ENCODE measurements at regions of chr2 and their contacts with region 1.

Region 1: GRCh38 chr2:226984750-226985582 is 149.1 kb downstream of the RHBDD1 start:
- DNase-seq: peak in 2 of 5 donors; percentile 29 to 37
- ATAC-seq: peak; percentile 60 to 87 (median 72)
- H3K4me3 ChIP-seq: no peak overlapping the region
- H3K27ac ChIP-seq: no peak overlapping the region
- H3K4me1 ChIP-seq: peaks cover 0 to 14% (median 6%) of the 10 kb centered on the region in 12 donors
- H3K27me3 ChIP-seq: no peaks in the 10 kb centered on the region
- CTCF ChIP-seq: peak; percentile 35 to 77 (median 66)
- POLR2A ChIP-seq: no peak

Region 2: DNA sequence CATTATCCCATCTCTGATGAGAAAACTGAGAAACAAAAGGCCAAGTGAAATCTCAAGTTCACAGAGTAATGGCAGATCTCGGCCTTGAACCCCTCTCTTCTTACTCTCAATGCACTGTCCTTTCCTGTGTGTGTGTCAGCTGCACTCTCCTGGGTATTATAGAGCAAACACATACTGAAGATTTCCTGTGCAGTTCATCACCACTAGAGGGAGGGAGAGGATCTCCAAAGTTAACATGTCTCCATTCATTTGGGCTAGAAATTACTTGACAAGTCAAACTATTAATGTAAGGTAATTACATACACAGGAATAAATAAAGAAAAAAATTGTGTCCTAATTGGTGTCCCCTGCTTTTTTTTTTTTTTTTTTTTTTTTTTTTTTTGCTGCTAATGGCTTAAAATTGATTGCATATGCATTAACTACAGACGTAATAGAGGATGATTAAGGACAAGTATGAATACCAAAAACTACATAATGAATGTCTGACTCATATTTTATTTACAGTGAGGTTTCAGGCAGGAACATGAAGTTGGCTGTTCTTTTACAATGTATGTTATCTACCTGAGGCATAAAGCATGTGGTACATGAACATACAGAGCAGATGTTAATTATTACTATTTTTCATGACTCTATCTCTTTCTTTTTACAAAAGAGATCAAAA is 1316.2 kb before region 1 on chr2:
- intact Hi-C with region 1: loop called (anchors 1 to 5 kb)
- DNase-seq: peak in 1 of 5 donors; percentile 10
- ATAC-seq: peak in 3 of 4 donors; percentile 63 to 69 (median 67)
- H3K4me3 ChIP-seq: no peak overlapping the region
- H3K27ac ChIP-seq: no peak overlapping the region
- H3K4me1 ChIP-seq: no peaks in the 10 kb centered on the region
- H3K27me3 ChIP-seq: peaks cover 0 to 15% (median 0%) of the 10 kb centered on the region in 9 donors
- CTCF ChIP-seq: peak; percentile 43 to 76 (median 58)
- POLR2A ChIP-seq: no peak

Region 3: GRCh38 chr2:225889446-225889850 is 1095.5 kb before region 1 on chr2:
- intact Hi-C with region 1: loop called in 9 of 10 experiments (anchors 5 to 10 kb)
- DNase-seq: peak in 1 of 5 donors; percentile 7
- ATAC-seq: peak in 2 of 4 donors; percentile 52 to 64
- H3K4me3 ChIP-seq: no peak overlapping the region
- H3K27ac ChIP-seq: no peak overlapping the region
- H3K4me1 ChIP-seq: no peaks in the 10 kb centered on the region
- H3K27me3 ChIP-seq: no peaks in the 10 kb centered on the region
- CTCF ChIP-seq: peak; percentile 49 to 86 (median 76)
- POLR2A ChIP-seq: no peak

Region 4: DNA sequence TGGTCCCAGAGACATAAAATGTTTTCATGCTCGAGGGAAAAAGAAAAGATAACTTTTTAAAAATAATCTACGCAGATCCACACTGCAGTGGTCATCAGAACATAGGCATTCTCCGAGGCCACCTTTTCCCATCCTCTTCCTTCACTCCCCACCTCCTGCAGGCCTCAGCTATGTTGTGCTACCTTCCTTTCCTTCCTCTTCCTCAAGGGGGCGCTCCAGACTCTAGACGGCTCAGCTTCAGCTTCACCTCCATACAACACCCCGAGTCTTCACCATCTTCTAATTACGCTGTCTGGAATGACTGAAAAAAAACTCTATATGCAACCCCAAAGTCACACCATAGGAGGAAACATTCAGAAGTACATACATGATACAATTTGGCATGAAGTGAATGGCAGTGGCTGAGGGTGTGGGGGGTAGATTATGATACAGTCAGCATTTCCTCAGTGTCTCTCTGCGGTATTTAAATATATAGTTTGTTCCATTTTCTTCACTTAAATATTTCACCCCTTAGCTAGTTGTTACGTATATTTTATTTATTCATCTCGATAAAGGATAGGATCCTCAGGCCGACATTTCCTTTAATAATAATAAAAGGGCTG is 769.0 kb before region 1 on chr2:
- intact Hi-C with region 1: loop called in 1 of 10 experiments (anchors 10 kb)
- DNase-seq: peak in 4 of 5 donors; percentile 35 to 57 (median 42)
- ATAC-seq: peak; percentile 37 to 82 (median 80)
- H3K4me3 ChIP-seq: no peak overlapping the region
- H3K27ac ChIP-seq: no peak overlapping the region
- H3K4me1 ChIP-seq: peaks cover 0 to 14% (median 7%) of the 10 kb centered on the region in 12 donors
- H3K27me3 ChIP-seq: no peaks in the 10 kb centered on the region
- CTCF ChIP-seq: peak; percentile 46 to 74 (median 63)
- POLR2A ChIP-seq: no peak

Region 5: GRCh38 chr2:226813148-226813701 is 171.7 kb before region 1 on chr2:
- intact Hi-C with region 1: loop called in 4 of 10 experiments (anchors 5 to 10 kb)
- DNase-seq: no peak
- ATAC-seq: no peak
- H3K4me3 ChIP-seq: no peak overlapping the region
- H3K27ac ChIP-seq: no peak overlapping the region
- H3K4me1 ChIP-seq: no peaks in the 10 kb centered on the region
- H3K27me3 ChIP-seq: peaks cover 0 to 3% (median 0%) of the 10 kb centered on the region in 9 donors
- CTCF ChIP-seq: peak in 3 of 12 donors; percentile 13 to 21 (median 20)
- POLR2A ChIP-seq: no peak

Region 6: GRCh38 chr2:226835796-226836547 is 149.0 kb before region 1 on chr2 and contains the start of gene RHBDD1:
- intact Hi-C with region 1: loop called in 2 of 10 experiments (anchors 10 kb)
- DNase-seq: peak; percentile 95 to 97 (median 96)
- ATAC-seq: peak; percentile 100
- H3K4me3 ChIP-seq: peak within 1 kb of the TSS; percentile 74 to 94 (median 85)
- H3K27ac ChIP-seq: peak within 1 kb of the TSS; percentile 92 to 99 (median 98)
- H3K4me1 ChIP-seq: peaks cover 0 to 32% (median 20%) of the 10 kb centered on the region in 12 donors
- H3K27me3 ChIP-seq: no peaks in the 10 kb centered on the region
- CTCF ChIP-seq: no peak
- POLR2A ChIP-seq: peak; percentile 49 to 90
- total RNA-seq, gene RHBDD1: 12.5 to 44.5 (median 33.2) TPM